Spleen (tissue), 13 donors: ENCODE measurements at regions of chr4 and their contacts with region 1.

Region 1: GRCh38 chr4:119041951-119042560 is 93.6 kb upstream of the MYOZ2 start:
- DNase-seq: no peak
- H3K4me3 ChIP-seq: no peak overlapping the region
- H3K27ac ChIP-seq: no peak overlapping the region
- H3K4me1 ChIP-seq: peaks cover 0 to 25% (median 11%) of the 10 kb centered on the region in 6 donors
- H3K27me3 ChIP-seq: peaks cover 0 to 2% (median 0%) of the 10 kb centered on the region in 7 donors
- CTCF ChIP-seq: peak; percentile 13 to 71 (median 57)
- POLR2A ChIP-seq: no peak

Region 2: DNA sequence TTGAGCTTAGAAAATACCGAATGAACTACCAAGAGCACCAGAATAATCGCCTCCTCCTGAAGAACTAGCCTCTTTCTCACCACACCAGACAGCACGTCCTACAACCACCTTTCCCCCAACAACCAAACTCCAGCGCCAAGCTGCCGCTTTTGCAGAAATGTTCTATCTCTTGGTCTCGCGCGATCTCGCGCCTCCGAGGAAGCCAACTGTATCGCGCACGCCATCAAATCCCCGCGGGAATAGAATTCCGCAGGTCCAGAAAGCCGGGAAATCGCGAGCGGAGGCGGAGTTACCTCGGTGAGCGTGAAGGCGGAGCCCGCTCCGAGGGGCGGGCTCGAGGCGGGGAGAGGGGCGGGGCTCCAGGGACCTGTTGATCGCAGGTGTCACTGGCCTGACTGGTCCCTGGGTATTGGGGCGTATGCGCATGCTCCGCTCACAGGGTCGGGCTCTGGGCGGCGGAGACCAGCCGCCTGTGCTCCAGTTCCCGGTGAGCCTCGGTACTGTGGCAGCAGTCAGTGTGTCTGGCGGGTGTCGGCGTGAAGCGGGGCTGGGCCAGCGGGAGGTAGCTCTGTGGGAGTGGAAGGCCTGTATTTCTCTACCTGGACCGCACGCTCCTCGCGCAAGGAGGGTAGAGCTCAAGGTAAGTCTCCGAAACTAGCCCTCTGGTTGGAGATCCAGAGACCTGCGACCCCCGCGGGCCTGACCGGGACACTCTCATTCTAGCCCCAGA is 170.3 kb after region 1 on chr4 and contains the start of gene USP53:
- intact Hi-C with region 1: loop called (anchors 10 kb)
- DNase-seq: peak; percentile 99
- H3K4me3 ChIP-seq: peak within 1 kb of the TSS; percentile 61 to 82 (median 70)
- H3K27ac ChIP-seq: peak within 1 kb of the TSS; percentile 79 to 94 (median 90)
- H3K4me1 ChIP-seq: peaks cover 0 to 36% (median 15%) of the 10 kb centered on the region in 6 donors
- H3K27me3 ChIP-seq: no peaks in the 10 kb centered on the region
- CTCF ChIP-seq: peak in 3 of 11 experiments; percentile 2 to 32 (median 5)
- POLR2A ChIP-seq: peak; percentile 28 to 89 (median 82)
- total RNA-seq, gene USP53: 8.1 to 42.6 (median 22.7) TPM

Region 3: DNA sequence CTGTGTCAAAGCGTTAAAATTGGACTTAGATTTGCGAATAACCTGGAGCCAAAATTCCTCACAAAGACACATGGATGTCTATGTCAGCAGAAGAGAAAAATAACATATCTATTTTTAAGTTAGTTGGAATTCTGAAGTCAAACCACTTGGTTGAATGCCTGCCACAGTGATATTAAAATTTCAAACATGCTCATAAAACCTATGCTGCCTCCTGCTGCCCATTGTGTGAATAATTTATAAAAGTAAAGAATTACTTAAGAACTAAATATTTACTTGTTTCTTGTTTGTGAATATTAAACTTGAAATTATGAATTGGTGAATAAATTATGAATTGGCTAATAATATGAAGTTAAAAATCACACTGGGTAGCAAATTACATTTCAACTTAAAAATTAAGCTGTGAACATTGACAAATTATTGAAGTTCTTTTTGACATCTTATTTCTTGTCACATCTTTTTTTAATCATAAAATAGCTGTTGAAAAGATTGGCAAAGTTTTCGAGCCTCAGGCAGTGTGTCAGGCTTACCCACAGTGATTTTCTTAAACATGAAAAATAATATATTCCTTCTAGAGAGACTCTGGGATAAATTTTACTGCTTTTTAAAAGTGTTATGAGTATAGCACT is 244.4 kb after region 1 on chr4:
- intact Hi-C with region 1: loop called (anchors 5 kb)
- DNase-seq: no peak
- H3K4me3 ChIP-seq: no peak overlapping the region
- H3K27ac ChIP-seq: no peak overlapping the region
- H3K4me1 ChIP-seq: peaks cover 0 to 32% (median 20%) of the 10 kb centered on the region in 6 donors
- H3K27me3 ChIP-seq: no peaks in the 10 kb centered on the region
- CTCF ChIP-seq: peak in 10 of 11 experiments; percentile 18 to 67 (median 49)
- POLR2A ChIP-seq: no peak